ENCODE measurements at regions of chr1 and their contacts with region 1.

Region 1: GRCh38 chr1:155989242-155990004 is 11.1 kb upstream of the ARHGEF2 start:
- DNase-seq: peak; percentile 88
- ATAC-seq: peak; percentile 96
- H3K4me3 Mint-ChIP-seq: no peak overlapping the region
- H3K27ac Mint-ChIP-seq: no peak overlapping the region
- H3K4me1 Mint-ChIP-seq: peaks cover 16% of the 10 kb centered on the region
- H3K27me3 Mint-ChIP-seq: no peaks in the 10 kb centered on the region

Region 2: GRCh38 chr1:155776404-155776803 is 213.0 kb before region 1 on chr1:
- CTCF ChIA-PET with region 1: no interaction called
- POLR2A ChIA-PET with region 1: no interaction called
- intact Hi-C with region 1: loop called in 1 of 2 experiments (anchors 10 kb)
- DNase-seq: peak; percentile 39
- ATAC-seq: peak; percentile 51
- H3K4me3 Mint-ChIP-seq: no peak overlapping the region
- H3K27ac Mint-ChIP-seq: peak overlapping the region; percentile 87
- H3K4me1 Mint-ChIP-seq: peaks cover 9% of the 10 kb centered on the region
- H3K27me3 Mint-ChIP-seq: no peaks in the 10 kb centered on the region

Region 3: GRCh38 chr1:155946633-155947219 is 42.7 kb before region 1 on chr1:
- CTCF ChIA-PET with region 1: interaction called, 10 read pairs
- POLR2A ChIA-PET with region 1: no interaction called
- intact Hi-C with region 1: no loop called
- DNase-seq: no peak
- ATAC-seq: peak; percentile 13
- H3K4me3 Mint-ChIP-seq: peak overlapping the region; percentile 58
- H3K27ac Mint-ChIP-seq: peak overlapping the region; percentile 96
- H3K4me1 Mint-ChIP-seq: peaks cover 50% of the 10 kb centered on the region
- H3K27me3 Mint-ChIP-seq: no peaks in the 10 kb centered on the region

Region 4: DNA sequence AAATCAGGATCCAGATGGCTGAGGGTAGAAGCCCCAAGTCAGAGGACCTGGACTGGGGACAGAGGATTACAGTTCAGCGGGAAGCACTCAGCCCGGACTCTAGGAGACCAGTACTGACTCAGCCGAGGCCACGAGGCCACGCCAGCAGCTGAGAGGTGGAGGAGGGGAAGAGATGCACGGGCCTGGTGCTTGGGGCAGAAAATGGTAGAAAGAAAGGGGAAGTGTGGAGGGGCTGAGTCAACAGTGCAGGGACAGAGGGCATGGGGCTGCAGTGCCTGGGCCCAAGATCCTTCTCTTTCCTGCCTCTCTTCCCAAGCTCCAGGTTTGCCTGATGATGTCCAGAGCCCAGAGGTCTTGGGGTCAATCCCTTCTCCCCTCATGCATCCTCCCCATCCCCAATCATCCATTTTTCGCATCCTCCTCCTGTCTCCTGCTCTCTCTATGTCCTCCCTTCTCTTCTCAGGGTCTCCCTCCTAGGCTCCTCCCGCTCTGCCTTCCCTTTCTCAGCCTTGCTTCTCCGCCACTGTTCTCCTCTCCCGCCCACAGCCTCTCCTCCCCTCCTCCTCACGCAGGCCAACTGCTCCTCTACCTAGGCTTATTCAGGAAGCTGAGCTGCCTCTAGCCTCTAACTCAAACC is 18.8 kb before region 1 on chr1:
- CTCF ChIA-PET with region 1: interaction called, 27 read pairs
- POLR2A ChIA-PET with region 1: no interaction called
- intact Hi-C with region 1: loop called in 1 of 2 experiments (anchors 2 kb)
- DNase-seq: peak; percentile 69
- ATAC-seq: peak; percentile 82
- H3K4me3 Mint-ChIP-seq: peak overlapping the region; percentile 44
- H3K27ac Mint-ChIP-seq: peak overlapping the region; percentile 89
- H3K4me1 Mint-ChIP-seq: peaks cover 88% of the 10 kb centered on the region
- H3K27me3 Mint-ChIP-seq: no peaks in the 10 kb centered on the region

Region 5: DNA sequence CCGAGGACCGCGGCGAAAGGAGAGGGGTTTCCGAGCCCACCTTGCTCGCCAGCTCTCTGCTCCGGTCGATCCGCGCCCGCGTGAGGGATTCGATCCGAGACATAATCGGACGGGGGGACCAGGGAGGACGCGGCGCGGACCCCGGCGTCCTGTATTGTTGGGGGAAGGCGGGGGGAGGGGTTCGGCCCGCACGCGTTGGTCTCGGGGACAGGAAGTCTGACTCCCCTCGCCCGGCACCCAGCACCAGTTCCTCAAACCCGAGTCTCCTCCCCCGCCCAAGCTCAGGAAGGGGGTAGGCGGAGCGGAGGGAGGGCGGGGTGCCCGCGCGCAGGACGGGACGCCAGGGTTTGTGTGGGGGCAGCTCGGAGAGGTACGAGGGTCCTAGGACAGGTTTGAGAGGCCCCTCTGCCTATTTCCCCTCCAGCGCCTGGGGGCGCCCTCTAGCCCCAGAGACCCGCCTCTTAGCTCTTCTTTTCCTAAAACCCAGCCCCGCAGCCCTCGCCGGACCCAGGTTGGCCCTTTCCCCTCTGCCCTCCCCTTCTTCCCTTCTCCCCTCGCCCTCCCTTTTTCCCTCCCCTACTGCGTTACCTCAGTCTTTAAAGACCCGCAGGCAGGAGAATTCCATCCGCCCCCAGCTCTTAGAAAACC is 11.0 kb before region 1 on chr1 and contains the start of gene ARHGEF2:
- CTCF ChIA-PET with region 1: interaction called, 27 read pairs
- POLR2A ChIA-PET with region 1: no interaction called
- intact Hi-C with region 1: no loop called
- DNase-seq: peak; percentile 88
- ATAC-seq: peak; percentile 57
- H3K4me3 Mint-ChIP-seq: peak within 1 kb of the TSS; percentile 100
- H3K27ac Mint-ChIP-seq: peak within 1 kb of the TSS; percentile 96
- H3K4me1 Mint-ChIP-seq: peaks cover 68% of the 10 kb centered on the region
- H3K27me3 Mint-ChIP-seq: no peaks in the 10 kb centered on the region
- total RNA-seq, gene ARHGEF2: 135 to 216 TPM

Region 6: DNA sequence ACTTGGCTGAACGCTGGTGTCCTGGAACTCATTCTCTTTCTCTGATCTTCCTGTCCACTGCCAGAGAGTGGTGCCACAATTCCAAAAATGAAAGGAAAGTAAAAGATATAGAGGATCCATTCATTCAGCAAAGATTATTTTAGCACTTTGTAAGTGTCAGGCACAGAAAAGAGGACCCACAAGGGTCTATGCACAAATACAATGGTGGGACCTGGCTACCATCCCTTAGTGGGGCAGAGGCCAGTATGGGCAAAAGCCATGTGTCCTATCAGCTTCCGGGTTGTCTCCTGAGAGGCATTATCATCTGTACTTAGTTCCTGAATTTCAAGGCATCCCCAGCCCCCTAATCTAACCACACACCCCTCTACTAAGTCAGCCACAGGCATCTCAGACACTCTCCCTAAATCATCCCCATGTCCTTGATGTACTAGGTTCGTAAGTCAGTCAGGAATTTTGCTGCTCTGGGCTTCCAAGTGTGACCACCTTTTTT is 12.3 kb after region 1 on chr1:
- CTCF ChIA-PET with region 1: interaction called, 13 read pairs
- POLR2A ChIA-PET with region 1: no interaction called
- intact Hi-C with region 1: no loop called
- DNase-seq: no peak
- ATAC-seq: no peak
- H3K4me3 Mint-ChIP-seq: no peak overlapping the region
- H3K27ac Mint-ChIP-seq: no peak overlapping the region
- H3K4me1 Mint-ChIP-seq: peaks cover 16% of the 10 kb centered on the region
- H3K27me3 Mint-ChIP-seq: no peaks in the 10 kb centered on the region

Region 7: DNA sequence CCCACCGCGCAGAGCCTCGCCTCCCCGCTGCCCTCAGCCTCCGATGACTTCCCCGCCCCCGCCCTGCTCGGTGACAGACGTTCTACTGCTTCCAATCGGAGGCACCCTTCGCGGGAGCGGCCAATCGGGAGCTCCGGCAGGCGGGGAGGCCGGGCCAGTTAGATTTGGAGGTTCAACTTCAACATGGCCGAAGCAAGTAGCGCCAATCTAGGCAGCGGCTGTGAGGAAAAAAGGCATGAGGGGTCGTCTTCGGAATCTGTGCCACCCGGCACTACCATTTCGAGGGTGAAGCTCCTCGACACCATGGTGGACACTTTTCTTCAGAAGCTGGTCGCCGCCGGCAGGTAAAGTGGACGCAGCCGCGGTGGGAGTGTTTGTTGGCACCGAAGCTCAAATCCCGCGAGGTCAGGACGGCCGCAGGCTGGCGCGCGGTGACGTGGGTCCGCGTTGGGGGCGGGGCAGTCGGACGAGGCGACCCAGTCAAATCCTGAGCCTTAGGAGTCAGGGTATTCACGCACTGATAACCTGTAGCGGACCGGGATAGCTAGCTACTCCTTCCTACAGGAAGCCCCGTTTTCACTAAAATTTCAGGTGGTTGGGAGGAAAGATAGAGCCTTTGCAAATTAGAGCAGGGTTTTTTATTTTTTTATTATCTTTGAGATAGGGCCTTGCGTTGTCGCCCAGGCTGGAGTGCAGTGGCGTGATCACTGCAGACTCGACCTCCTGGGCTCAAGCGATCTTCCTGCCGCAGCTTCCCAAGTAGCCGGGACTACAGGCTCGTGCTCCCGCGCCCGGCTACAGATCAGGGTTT is 223.6 kb after region 1 on chr1 and contains the start of gene PMF1:
- CTCF ChIA-PET with region 1: no interaction called
- POLR2A ChIA-PET with region 1: no interaction called
- intact Hi-C with region 1: no loop called
- DNase-seq: peak; percentile 98
- ATAC-seq: peak; percentile 90
- H3K4me3 Mint-ChIP-seq: peak within 1 kb of the TSS; percentile 76
- H3K27ac Mint-ChIP-seq: peak within 1 kb of the TSS; percentile 98
- H3K4me1 Mint-ChIP-seq: peaks cover 41% of the 10 kb centered on the region
- H3K27me3 Mint-ChIP-seq: no peaks in the 10 kb centered on the region
- total RNA-seq, gene PMF1: 108 to 117 TPM